ENCODE measurements at regions of chr10 and their contacts with region 1.

Region 1: DNA sequence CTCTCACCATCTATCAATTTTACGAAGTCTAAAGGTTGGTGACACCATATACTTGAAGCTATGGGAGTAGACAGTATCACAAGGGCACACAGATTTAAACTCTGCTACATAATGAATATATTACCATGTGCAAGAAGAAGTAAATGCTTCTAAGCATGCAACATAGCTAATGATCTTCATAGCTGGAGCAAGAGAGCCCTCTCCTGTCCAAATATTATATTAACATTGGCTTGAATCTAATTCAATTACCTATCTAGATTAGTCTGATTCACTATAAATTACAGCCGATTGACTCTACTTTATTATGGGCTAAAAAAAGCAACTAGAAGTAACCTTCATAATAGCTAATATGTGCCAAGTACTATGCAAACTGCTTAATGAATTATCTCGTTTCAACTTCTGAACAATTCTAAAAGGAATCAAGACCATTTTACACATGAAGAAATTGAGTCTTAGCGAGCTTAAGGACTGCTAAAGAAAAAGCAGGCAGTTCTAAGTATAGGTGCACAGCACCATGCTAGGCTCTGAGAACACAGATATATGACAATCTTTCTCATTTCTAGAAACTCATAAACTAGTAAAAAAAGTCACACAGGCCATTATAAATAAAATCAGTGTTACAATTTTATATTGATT is 21.9 kb downstream of the FRA10AC1 start:
- DNase-seq: peak; percentile 12
- H3K4me3 ChIP-seq: no peak overlapping the region
- H3K27ac ChIP-seq: no peak overlapping the region
- H3K4me1 ChIP-seq: no peaks in the 10 kb centered on the region
- H3K27me3 ChIP-seq: no peaks in the 10 kb centered on the region
- CTCF ChIP-seq: peak; percentile 66
- EP300 ChIP-seq: no peak
- RAD21 ChIP-seq: peak; percentile 78

Region 2: GRCh38 chr10:93541402-93542357 is 138.8 kb before region 1 on chr10:
- CTCF ChIA-PET with region 1: interaction called, 15 read pairs
- POLR2A ChIA-PET with region 1: no interaction called
- DNase-seq: peak; percentile 67
- H3K4me3 ChIP-seq: peak overlapping the region; percentile 25 to 39
- H3K27ac ChIP-seq: no peak overlapping the region
- H3K4me1 ChIP-seq: peaks cover 0 to 8% of the 10 kb centered on the region in 2 experiments; a peak in 1 of 4 replicates
- H3K27me3 ChIP-seq: no peaks in the 10 kb centered on the region
- CTCF ChIP-seq: peak; percentile 94
- EP300 ChIP-seq: no peak
- RAD21 ChIP-seq: peak; percentile 67

Region 3: DNA sequence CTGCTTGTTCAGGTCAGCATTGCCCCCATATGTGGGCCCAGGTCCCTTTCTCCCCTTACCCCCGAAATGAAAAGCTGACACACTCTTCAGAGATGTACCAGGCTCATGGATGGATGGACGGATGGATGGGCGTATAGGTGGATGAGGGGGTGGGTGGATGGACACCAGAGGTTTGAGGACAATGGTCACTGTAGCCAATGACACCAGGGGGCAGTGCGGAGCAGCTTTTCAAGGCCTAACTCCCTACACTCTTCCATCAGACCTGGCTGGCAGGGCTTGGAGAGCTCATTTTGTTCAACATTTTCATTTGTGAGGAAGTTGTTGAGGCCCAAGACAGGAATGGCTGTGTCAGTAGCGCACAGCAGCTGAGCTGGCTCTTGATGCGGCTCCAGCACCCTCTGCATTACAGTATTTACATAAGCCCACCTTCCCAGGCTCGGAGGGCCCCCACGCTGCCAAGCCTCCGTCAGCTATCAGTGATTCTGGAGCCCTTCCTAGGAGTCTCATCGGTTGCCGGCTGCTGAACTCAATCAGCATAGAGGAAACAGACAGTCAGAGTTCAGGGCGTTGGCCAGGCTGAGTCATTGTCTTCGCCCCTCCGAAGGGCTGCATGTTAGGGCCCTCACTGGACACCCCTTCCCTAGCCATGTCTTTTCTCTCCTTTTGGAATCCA is 125.6 kb before region 1 on chr10:
- CTCF ChIA-PET with region 1: interaction called, 38 read pairs
- POLR2A ChIA-PET with region 1: no interaction called
- DNase-seq: peak; percentile 79
- H3K4me3 ChIP-seq: no peak overlapping the region
- H3K27ac ChIP-seq: no peak overlapping the region
- H3K4me1 ChIP-seq: no peaks in the 10 kb centered on the region
- H3K27me3 ChIP-seq: no peaks in the 10 kb centered on the region
- CTCF ChIP-seq: peak; percentile 67
- EP300 ChIP-seq: no peak
- RAD21 ChIP-seq: peak; percentile 72

Region 4: DNA sequence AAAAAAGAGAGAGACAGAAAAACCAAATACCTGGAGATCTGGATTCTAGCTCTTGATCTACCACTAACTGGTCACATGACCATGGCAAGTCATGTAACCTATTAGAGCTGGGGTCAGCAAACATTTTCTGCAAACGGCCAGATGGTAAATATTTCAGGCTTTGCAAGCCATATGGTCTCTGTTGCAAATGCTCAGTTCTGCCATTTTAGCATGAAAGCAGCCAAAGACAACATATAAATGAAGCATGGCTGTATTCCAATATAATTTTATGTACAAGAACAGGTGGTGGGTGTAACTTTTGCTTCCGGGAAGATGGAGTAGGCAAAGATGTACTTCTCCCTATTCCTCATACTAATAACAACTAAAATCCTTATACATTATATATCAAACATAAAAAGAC is 15.2 kb after region 1 on chr10:
- CTCF ChIA-PET with region 1: interaction called, 10 read pairs
- POLR2A ChIA-PET with region 1: no interaction called
- DNase-seq: no peak
- H3K4me3 ChIP-seq: no peak overlapping the region
- H3K27ac ChIP-seq: no peak overlapping the region
- H3K4me1 ChIP-seq: peaks cover 0 to under 1% of the 10 kb centered on the region in 2 experiments; a peak in 2 of 4 replicates
- H3K27me3 ChIP-seq: no peaks in the 10 kb centered on the region
- CTCF ChIP-seq: no peak
- EP300 ChIP-seq: no peak
- RAD21 ChIP-seq: no peak

Region 5: GRCh38 chr10:93702211-93703001 is 21.9 kb after region 1 on chr10 and contains the start of gene FRA10AC1:
- CTCF ChIA-PET with region 1: interaction called, 10 read pairs
- POLR2A ChIA-PET with region 1: interaction called, 3 read pairs
- DNase-seq: peak; percentile 89
- H3K4me3 ChIP-seq: peak within 1 kb of the TSS; percentile 79 to 91
- H3K27ac ChIP-seq: peak within 1 kb of the TSS; percentile 86 to 99
- H3K4me1 ChIP-seq: peaks cover 0 to 4% of the 10 kb centered on the region in 2 experiments; a peak in 3 of 4 replicates
- H3K27me3 ChIP-seq: no peaks in the 10 kb centered on the region
- CTCF ChIP-seq: peak; percentile 69
- EP300 ChIP-seq: peak in 1 of 2 experiments; percentile 73; a peak in 1 of 4 replicates
- RAD21 ChIP-seq: peak; percentile 75
- polyA plus RNA-seq, gene FRA10AC1: 3.9 and 4.1 TPM in 2 replicates

Measured in SK-N-SH (cell line).